OCI-LY7 (cell line): ENCODE measurements at regions of chr6 and their contacts with region 1.

Region 1: GRCh38 chr6:30616811-30617564 is at the start of gene PPP1R10:
- DNase-seq: peak; percentile 100
- H3K4me3 ChIP-seq: peak within 1 kb of the TSS; percentile 88
- H3K27ac ChIP-seq: peak within 1 kb of the TSS; percentile 91
- H3K4me1 ChIP-seq: peaks cover 37% of the 10 kb centered on the region
- CTCF ChIP-seq: no peak
- total RNA-seq, gene PPP1R10: 103 and 126 TPM in 2 replicates

Region 2: GRCh38 chr6:30571075-30571768 is 45.8 kb before region 1 on chr6 and contains the start of gene ABCF1:
- CTCF ChIA-PET with region 1: no interaction called
- POLR2A ChIA-PET with region 1: interaction called, 7 read pairs
- intact Hi-C with region 1: loop called (anchors 2 kb)
- DNase-seq: peak; percentile 99
- H3K4me3 ChIP-seq: peak within 1 kb of the TSS; percentile 93
- H3K27ac ChIP-seq: peak within 1 kb of the TSS; percentile 74
- H3K4me1 ChIP-seq: peaks cover 40% of the 10 kb centered on the region
- CTCF ChIP-seq: no peak
- total RNA-seq, gene ABCF1: 53.0 and 126 TPM in 2 replicates

Region 3: GRCh38 chr6:30646458-30647241 is 29.7 kb after region 1 on chr6 and contains the start of gene C6orf136:
- CTCF ChIA-PET with region 1: no interaction called
- POLR2A ChIA-PET with region 1: interaction called, 5 read pairs
- intact Hi-C with region 1: loop called (anchors 1 kb)
- DNase-seq: peak; percentile 97
- H3K4me3 ChIP-seq: peak within 1 kb of the TSS; percentile 93
- H3K27ac ChIP-seq: peak within 1 kb of the TSS; percentile 77
- H3K4me1 ChIP-seq: peaks cover 16% of the 10 kb centered on the region
- CTCF ChIP-seq: no peak
- total RNA-seq, gene C6orf136: 9.1 and 14.7 TPM in 2 replicates

Region 4: GRCh38 chr6:30703821-30704360 is 86.9 kb after region 1 on chr6:
- CTCF ChIA-PET with region 1: interaction called, 4 read pairs
- POLR2A ChIA-PET with region 1: interaction called, 10 read pairs
- intact Hi-C with region 1: no loop called
- DNase-seq: no peak
- H3K4me3 ChIP-seq: no peak overlapping the region
- H3K27ac ChIP-seq: no peak overlapping the region
- H3K4me1 ChIP-seq: no peaks in the 10 kb centered on the region
- CTCF ChIP-seq: no peak

Region 5: GRCh38 chr6:30742316-30743098 is 125.5 kb after region 1 on chr6 and contains the start of gene FLOT1:
- CTCF ChIA-PET with region 1: no interaction called
- POLR2A ChIA-PET with region 1: interaction called, 5 read pairs
- intact Hi-C with region 1: loop called (anchors 5 kb)
- DNase-seq: peak; percentile 84
- H3K4me3 ChIP-seq: peak within 1 kb of the TSS; percentile 91
- H3K27ac ChIP-seq: peak within 1 kb of the TSS; percentile 50
- H3K4me1 ChIP-seq: peaks cover 31% of the 10 kb centered on the region
- CTCF ChIP-seq: 0 out of 2 replicates have a peak, but pooled peaks have one; percentile 23
- total RNA-seq, gene FLOT1: 66.7 and 70.7 TPM in 2 replicates

Region 6: DNA sequence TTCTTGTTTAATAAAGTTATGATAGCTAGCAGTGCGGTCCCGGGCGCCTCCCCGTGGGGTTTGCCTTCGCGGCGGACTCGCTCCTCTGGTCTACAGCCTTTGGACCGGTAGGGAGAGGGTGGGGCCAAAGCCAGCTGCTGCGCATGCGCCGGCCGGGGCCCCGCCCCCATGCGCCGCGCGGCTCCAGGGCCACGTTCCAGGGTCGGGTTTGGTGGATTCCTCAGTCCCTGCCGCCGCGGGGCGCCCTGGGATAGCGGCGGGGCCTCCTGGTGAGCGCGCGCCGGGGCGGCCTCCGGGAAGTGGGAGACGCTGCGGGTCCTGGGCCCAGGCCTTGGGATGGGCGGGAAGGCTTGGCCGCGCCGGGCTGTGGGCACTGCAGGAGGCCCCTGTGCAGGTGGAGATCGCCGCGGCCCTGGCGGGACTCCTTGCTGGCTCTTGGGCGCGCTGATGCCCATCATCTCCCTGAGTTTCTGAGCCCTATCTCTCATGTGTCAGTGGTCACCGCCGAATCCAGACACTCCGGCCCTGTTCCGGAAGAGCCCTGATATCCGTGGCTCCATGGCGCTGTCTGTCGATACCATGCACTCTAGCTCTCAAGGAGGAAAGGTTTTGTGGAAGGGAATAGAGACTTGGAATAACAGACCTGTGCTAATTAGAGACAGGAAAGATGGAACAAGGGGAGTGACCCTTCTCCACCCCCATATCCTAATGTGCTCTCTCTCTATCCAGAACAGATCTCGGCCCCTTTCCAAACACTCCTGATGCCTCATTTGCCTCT is 297.3 kb after region 1 on chr6 and contains the start of gene VARS2:
- CTCF ChIA-PET with region 1: no interaction called
- POLR2A ChIA-PET with region 1: no interaction called
- intact Hi-C with region 1: no loop called
- DNase-seq: peak; percentile 87
- H3K4me3 ChIP-seq: peak within 1 kb of the TSS; percentile 76
- H3K27ac ChIP-seq: peak within 1 kb of the TSS; percentile 63
- H3K4me1 ChIP-seq: peaks cover 23% of the 10 kb centered on the region
- CTCF ChIP-seq: peak; percentile 44
- total RNA-seq, gene VARS2: 71.4 and 81.8 TPM in 2 replicates

Region 7: DNA sequence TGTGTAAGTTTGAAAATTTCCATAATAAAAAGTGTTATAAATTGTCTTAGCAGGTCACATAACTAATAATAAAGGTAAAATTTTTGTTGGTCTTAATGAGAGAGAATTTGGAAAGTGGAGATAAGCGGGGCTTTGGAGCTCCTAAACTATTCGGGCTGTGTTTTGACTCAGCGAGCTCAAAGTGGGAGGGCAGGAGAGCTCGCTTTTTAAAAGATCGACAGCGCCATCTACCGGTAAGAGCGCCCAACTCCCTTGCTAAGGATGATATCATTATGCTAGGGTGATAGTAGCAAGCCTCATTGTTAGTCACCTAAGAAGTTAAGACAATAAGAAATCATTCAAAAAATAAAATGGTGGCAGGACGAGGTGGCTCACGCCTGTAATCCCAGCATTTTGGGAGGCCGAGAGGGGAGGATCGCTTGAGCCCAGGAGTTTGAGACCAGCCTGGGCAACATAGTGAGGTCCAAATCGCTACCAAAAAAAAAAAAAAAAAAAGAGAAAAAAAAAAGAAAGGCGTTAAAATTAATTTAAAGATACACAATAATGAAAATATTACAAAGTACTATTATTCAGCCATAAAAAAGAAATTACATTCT is 470.6 kb after region 1 on chr6:
- CTCF ChIA-PET with region 1: no interaction called
- POLR2A ChIA-PET with region 1: no interaction called
- intact Hi-C with region 1: no loop called
- DNase-seq: peak; percentile 83
- H3K4me3 ChIP-seq: no peak overlapping the region
- H3K27ac ChIP-seq: no peak overlapping the region
- H3K4me1 ChIP-seq: no peaks in the 10 kb centered on the region
- CTCF ChIP-seq: peak; percentile 85